ENCODE measurements at regions of chr16 and their contacts with region 1.

Region 1: GRCh38 chr16:25257504-25257955 is at the start of gene ZKSCAN2:
- DNase-seq: peak; percentile 81
- H3K4me3 ChIP-seq: peak within 1 kb of the TSS; percentile 64 to 91 (median 86)
- H3K27ac ChIP-seq: peak within 1 kb of the TSS; percentile 94
- H3K4me1 ChIP-seq: peaks cover 20% of the 10 kb centered on the region
- H3K27me3 ChIP-seq: no peaks in the 10 kb centered on the region
- CTCF ChIP-seq: no peak
- POLR2A ChIP-seq: peak; percentile 77
- total RNA-seq, gene ZKSCAN2: 4.7 and 4.8 TPM in 2 replicates

Region 2: GRCh38 chr16:24539291-24539849 is 718.2 kb before region 1 on chr16 and contains the start of gene RBBP6:
- CTCF ChIA-PET with region 1: no interaction called
- POLR2A ChIA-PET with region 1: no interaction called
- dilution Hi-C with region 1: no loop called
- intact Hi-C with region 1: loop called (anchors 5 kb)
- DNase-seq: peak; percentile 98
- H3K4me3 ChIP-seq: peak within 1 kb of the TSS; percentile 80 to 94 (median 88)
- H3K27ac ChIP-seq: peak within 1 kb of the TSS; percentile 96
- H3K4me1 ChIP-seq: peaks cover 36% of the 10 kb centered on the region
- H3K27me3 ChIP-seq: no peaks in the 10 kb centered on the region
- CTCF ChIP-seq: peak in 1 of 2 donors; percentile 28
- POLR2A ChIP-seq: peak; percentile 93
- total RNA-seq, gene RBBP6: 49.2 and 52.1 TPM in 2 replicates

Region 3: DNA sequence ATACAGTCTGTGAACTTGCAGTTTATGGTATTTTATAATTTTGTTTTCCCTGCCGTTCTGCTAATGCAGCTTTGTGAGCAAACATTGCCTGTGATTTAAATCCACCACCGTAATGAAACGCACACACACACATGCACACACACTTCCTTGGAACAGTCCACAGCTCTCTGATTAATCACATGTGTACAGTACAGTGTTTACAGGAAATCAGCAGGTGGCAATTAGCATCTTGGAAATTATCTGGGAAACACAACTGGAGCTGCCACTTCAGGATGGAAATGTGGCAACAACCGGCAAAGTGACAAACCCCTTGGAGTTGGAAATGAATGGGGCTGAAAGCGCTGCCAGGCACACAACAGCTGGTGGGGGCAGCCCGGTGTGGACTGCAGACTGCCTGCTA is 13.0 kb after region 1 on chr16:
- CTCF ChIA-PET with region 1: interaction called, 11 read pairs
- POLR2A ChIA-PET with region 1: interaction called, 3 read pairs
- dilution Hi-C with region 1: no loop called
- intact Hi-C with region 1: no loop called
- DNase-seq: no peak
- H3K4me3 ChIP-seq: no peak overlapping the region
- H3K27ac ChIP-seq: no peak overlapping the region
- H3K4me1 ChIP-seq: no peaks in the 10 kb centered on the region
- H3K27me3 ChIP-seq: no peaks in the 10 kb centered on the region
- CTCF ChIP-seq: no peak
- POLR2A ChIP-seq: no peak

Region 4: DNA sequence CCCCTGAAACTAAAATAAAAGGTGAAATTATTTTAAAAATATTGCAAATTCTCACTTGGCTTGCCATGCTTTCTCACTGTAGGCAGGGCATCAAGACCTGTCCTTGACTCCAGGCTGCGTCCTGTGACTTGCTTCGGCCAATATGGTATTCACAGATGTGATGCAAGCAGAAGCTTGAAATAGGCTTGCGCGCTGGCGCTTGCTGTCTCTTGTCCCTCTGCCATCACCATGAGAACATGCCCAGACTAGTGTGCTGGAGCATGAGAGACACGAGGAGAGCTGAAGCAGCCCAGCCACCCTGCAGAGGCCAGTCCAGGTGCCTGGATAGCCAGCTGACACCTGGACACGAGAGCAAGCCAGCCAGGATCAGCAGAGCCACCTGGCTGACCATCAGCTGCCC is 22.0 kb after region 1 on chr16:
- CTCF ChIA-PET with region 1: interaction called, 11 read pairs
- POLR2A ChIA-PET with region 1: no interaction called
- dilution Hi-C with region 1: no loop called
- intact Hi-C with region 1: no loop called
- DNase-seq: no peak
- H3K4me3 ChIP-seq: no peak overlapping the region
- H3K27ac ChIP-seq: no peak overlapping the region
- H3K4me1 ChIP-seq: no peaks in the 10 kb centered on the region
- H3K27me3 ChIP-seq: no peaks in the 10 kb centered on the region
- CTCF ChIP-seq: no peak
- POLR2A ChIP-seq: no peak

Region 5: DNA sequence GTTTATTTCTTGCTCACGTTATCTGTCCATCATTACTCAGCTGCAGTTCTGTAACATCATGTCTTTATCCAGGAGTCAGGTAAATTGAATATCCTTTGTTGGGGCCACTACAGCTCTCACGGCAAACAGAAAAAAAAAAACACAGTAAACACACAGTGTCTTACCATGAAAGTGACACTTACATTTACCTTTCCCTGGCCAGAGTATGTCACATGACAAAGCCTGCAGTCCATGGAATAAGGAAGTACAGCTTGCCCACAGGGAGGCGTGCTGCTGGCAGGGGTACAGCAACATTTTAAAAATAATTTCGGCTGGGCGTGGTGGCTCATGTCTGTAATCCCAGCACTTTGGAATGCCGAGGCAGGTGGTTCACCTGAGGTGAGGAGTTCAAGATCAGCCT is 348.5 kb after region 1 on chr16:
- CTCF ChIA-PET with region 1: no interaction called
- POLR2A ChIA-PET with region 1: no interaction called
- dilution Hi-C with region 1: no loop called
- intact Hi-C with region 1: no loop called
- DNase-seq: no peak
- H3K4me3 ChIP-seq: no peak overlapping the region
- H3K27ac ChIP-seq: no peak overlapping the region
- H3K4me1 ChIP-seq: no peaks in the 10 kb centered on the region
- H3K27me3 ChIP-seq: no peaks in the 10 kb centered on the region
- CTCF ChIP-seq: no peak
- POLR2A ChIP-seq: no peak

Region 6: DNA sequence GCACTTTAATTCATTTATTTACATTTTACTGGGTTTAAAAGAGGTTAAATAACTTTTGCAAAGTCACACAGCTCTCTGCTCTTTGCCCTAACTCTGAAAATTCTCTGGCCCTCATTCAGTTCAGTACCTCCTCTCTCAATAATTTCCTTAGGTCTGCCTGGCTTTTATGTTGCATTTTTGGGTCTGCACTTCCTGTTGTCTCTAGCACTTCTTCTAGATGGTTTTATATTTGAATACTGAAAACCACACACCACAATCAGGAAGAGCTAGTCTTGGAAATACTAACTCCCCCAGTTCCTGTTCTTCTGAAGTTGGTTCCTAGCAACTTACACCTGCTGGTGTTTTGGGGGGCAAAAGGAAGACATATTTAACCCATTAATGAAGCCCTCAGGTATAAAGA is 1012.1 kb after region 1 on chr16:
- CTCF ChIA-PET with region 1: no interaction called
- POLR2A ChIA-PET with region 1: no interaction called
- dilution Hi-C with region 1: no loop called
- intact Hi-C with region 1: no loop called
- DNase-seq: no peak
- H3K4me3 ChIP-seq: no peak overlapping the region
- H3K27ac ChIP-seq: no peak overlapping the region
- H3K4me1 ChIP-seq: no peaks in the 10 kb centered on the region
- H3K27me3 ChIP-seq: no peaks in the 10 kb centered on the region
- CTCF ChIP-seq: no peak
- POLR2A ChIP-seq: no peak

Measured in endothelial cell of umbilical vein (primary cell).